MCF 10A (cell line): ENCODE measurements at regions of chr6 and their contacts with region 1.

Region 1: DNA sequence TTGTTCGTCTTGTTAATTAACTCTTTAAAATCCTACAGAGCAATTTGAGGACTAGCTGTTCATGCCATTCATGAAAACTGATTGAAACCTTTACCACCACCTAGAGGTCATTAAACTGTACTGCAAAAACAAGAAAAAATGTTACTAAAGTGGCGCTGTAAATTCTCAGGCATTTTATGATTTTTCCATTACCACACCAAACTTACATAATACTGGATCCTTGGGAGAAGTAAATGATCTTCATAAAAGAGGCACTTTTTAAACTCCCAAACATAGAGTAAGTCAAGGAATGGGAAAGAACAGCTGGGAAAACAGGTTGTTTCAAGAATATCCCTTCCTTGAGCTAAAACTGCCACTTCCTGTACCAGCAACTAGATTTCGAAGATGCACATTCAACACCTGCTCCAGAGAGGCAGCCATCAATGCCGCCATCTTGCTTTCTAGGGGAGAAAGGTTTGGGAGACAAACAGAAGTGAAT is 54.3 kb downstream of the MYLIP start:
- DNase-seq: peak; percentile 46
- H3K4me3 Mint-ChIP-seq: no peak overlapping the region
- H3K27ac Mint-ChIP-seq: no peak overlapping the region
- H3K4me1 Mint-ChIP-seq: no peaks in the 10 kb centered on the region
- H3K27me3 Mint-ChIP-seq: no peaks in the 10 kb centered on the region
- CTCF ChIP-seq: peak; percentile 50

Region 2: GRCh38 chr6:15685619-15686018 is 497.6 kb before region 1 on chr6:
- CTCF ChIA-PET with region 1: interaction called, 17 read pairs
- POLR2A ChIA-PET with region 1: no interaction called
- intact Hi-C with region 1: no loop called
- DNase-seq: no peak
- H3K4me3 Mint-ChIP-seq: no peak overlapping the region
- H3K27ac Mint-ChIP-seq: no peak overlapping the region
- H3K4me1 Mint-ChIP-seq: no peaks in the 10 kb centered on the region
- H3K27me3 Mint-ChIP-seq: peaks cover 19% of the 10 kb centered on the region
- CTCF ChIP-seq: no peak

Region 3: DNA sequence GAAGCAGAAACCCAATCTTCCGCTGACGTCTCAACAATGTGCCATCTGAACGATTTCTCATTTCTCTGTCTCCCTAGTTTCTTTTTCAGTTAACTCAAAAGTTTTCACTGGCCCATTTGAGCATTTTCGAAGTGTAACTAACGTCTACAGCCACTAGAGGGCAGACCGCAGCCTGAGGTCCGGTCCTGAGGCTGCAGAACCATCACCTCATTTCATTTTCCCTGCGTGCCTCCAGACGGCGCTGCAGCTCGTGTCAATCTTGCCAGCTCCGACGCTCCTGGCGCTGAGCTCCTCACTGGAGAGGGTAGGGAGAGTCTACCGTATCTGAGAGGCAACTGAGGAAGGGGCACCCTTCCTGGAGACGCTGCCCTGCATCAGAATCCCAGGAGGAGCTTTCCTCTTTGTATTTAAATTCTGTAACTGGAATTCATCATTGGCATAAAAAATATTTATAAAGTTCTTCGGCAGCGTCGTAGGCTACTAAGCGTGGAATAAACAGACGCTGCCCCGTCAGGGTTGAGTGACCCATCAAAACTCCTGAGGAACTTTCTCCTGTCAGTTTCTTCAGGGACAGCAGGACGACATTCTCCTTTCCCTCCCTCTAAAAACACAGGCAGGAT is 491.9 kb before region 1 on chr6:
- CTCF ChIA-PET with region 1: interaction called, 116 read pairs
- POLR2A ChIA-PET with region 1: interaction called, 10 read pairs
- intact Hi-C with region 1: loop called (anchors 1 kb)
- DNase-seq: peak; percentile 86
- H3K4me3 Mint-ChIP-seq: peak overlapping the region; percentile 63
- H3K27ac Mint-ChIP-seq: no peak overlapping the region
- H3K4me1 Mint-ChIP-seq: no peaks in the 10 kb centered on the region
- H3K27me3 Mint-ChIP-seq: no peaks in the 10 kb centered on the region
- CTCF ChIP-seq: peak; percentile 98

Region 4: DNA sequence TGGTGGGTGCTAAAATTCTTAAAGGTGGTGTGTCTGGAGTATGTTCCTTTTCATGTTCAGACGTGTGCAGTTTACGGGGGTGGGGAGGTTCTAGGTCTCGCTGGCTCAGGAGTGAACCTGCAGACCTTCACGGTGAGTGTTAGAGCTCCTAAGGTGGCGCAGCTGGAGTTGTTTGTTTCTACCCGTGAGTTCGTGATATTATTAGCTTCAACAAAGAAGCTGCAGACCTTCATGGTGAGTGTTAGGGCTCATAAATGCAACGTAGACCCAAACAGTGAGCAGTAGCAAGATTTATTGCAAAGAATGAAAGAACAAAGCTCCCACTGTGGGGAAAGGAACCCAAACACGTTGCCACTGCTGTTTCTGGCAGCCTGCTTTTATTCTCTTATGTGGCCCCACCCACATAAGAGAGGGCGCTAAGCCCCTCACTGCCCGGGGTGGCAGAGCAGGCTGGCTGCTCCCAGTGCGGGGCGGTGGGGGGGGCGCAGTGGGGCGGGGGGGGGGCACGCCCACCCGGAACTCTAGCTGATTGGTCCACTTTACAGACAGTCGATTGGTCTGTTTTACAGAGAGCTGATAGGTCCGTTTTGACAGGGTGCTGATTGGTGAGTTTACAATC is 13.8 kb after region 1 on chr6:
- CTCF ChIA-PET with region 1: interaction called, 11 read pairs
- POLR2A ChIA-PET with region 1: interaction called, 3 read pairs
- intact Hi-C with region 1: no loop called
- DNase-seq: no peak
- H3K4me3 Mint-ChIP-seq: peak overlapping the region; percentile 33
- H3K27ac Mint-ChIP-seq: no peak overlapping the region
- H3K4me1 Mint-ChIP-seq: no peaks in the 10 kb centered on the region
- H3K27me3 Mint-ChIP-seq: no peaks in the 10 kb centered on the region
- CTCF ChIP-seq: no peak

Region 5: DNA sequence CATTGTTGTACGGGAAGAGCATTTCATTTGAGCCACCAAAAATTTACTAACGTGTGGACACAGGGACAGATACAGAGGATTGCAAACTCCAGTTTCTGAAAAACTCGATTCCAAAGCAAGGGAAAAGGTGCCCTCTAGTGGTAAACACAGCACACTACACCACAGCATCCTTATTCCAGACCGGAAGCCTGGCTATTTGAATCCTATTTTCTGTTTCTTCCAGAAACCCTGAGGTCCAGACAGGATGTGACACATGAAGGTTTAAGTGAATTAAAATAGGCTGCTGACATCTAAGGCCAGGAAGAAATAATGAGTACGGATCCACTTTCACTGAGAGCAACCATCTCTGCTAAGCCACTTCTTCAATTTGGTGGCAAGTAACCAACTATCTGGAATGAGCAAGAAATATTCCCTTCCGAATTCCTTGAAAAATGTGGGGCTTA is 23.4 kb after region 1 on chr6:
- CTCF ChIA-PET with region 1: interaction called, 18 read pairs
- POLR2A ChIA-PET with region 1: interaction called, 4 read pairs
- intact Hi-C with region 1: no loop called
- DNase-seq: peak; percentile 60
- H3K4me3 Mint-ChIP-seq: no peak overlapping the region
- H3K27ac Mint-ChIP-seq: no peak overlapping the region
- H3K4me1 Mint-ChIP-seq: peaks cover 4% of the 10 kb centered on the region
- H3K27me3 Mint-ChIP-seq: peaks cover 13% of the 10 kb centered on the region
- CTCF ChIP-seq: peak; percentile 76

Region 6: DNA sequence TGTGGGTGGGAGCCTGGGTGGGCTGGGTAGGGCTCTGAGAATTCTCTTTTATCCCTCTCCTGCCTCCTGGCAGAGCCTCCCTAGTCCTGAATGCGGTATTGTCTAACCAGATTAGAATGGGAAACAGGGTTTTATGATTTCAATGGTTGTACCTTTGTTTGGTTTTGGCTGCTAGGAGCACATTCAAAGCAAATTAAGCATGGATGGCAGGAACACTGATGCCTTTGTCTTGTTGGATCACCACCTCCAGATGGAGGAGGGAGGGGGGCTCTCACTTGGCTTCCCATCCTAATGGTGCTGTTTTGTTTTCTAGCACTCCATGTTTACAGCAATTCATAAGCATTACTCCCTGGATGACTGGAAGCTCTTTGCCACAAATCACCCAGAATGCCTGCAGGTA is 66.7 kb after region 1 on chr6:
- CTCF ChIA-PET with region 1: no interaction called
- POLR2A ChIA-PET with region 1: no interaction called
- intact Hi-C with region 1: no loop called
- DNase-seq: no peak
- H3K4me3 Mint-ChIP-seq: no peak overlapping the region
- H3K27ac Mint-ChIP-seq: no peak overlapping the region
- H3K4me1 Mint-ChIP-seq: peaks cover 17% of the 10 kb centered on the region
- H3K27me3 Mint-ChIP-seq: no peaks in the 10 kb centered on the region
- CTCF ChIP-seq: no peak

Region 7: GRCh38 chr6:16471222-16471909 is 288.1 kb after region 1 on chr6:
- CTCF ChIA-PET with region 1: no interaction called
- POLR2A ChIA-PET with region 1: no interaction called
- intact Hi-C with region 1: no loop called
- DNase-seq: no peak
- H3K4me3 Mint-ChIP-seq: no peak overlapping the region
- H3K27ac Mint-ChIP-seq: no peak overlapping the region
- H3K4me1 Mint-ChIP-seq: peaks cover 5% of the 10 kb centered on the region
- H3K27me3 Mint-ChIP-seq: no peaks in the 10 kb centered on the region
- CTCF ChIP-seq: no peak